Sigmoid colon (tissue), 7 donors: ENCODE measurements at regions of chr2 and their contacts with region 1.

Region 1: GRCh38 chr2:222903234-222904220 is 42.7 kb downstream of the ACSL3 start:
- DNase-seq: no peak
- H3K4me3 ChIP-seq: no peak overlapping the region
- H3K27ac ChIP-seq: no peak overlapping the region
- H3K4me1 ChIP-seq: peaks cover 0 to 71% (median 61%) of the 10 kb centered on the region in 4 donors
- H3K27me3 ChIP-seq: no peaks in the 10 kb centered on the region
- CTCF ChIP-seq: peak; percentile 24 to 62 (median 56)
- EP300 ChIP-seq: no peak
- POLR2A ChIP-seq: no peak

Region 2: DNA sequence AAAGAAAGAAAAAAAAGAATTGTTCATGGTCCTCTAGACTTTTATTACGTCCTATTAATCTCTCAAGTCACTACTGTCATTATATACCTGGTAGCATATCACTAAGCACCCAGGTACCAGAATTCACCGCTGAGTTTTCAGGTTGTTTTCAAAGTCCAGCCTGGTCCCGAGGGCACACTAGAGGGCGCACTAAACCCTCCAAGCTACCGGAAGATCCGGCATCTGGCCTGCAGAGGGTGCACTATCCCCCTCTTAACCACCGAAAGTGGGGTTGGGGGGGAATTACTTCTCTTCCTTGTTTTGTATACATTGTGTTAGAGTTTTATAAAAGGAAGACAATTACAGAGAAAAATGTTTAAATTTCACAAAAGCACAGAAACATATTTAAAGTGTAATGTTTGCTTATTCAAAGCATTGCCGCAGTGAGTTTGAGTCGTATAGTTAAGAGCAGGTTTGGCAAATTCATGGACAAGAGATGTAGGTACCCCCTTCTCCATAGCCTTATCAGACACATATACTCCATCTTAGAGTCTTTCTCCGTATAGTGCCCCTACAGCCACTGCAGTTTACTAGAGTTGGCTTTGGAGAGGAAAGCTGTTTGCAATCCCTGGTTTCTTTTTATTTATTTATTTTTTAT is 212.8 kb before region 1 on chr2:
- intact Hi-C with region 1: loop called (anchors 5 kb)
- DNase-seq: peak; percentile 80
- H3K4me3 ChIP-seq: no peak overlapping the region
- H3K27ac ChIP-seq: no peak overlapping the region
- H3K4me1 ChIP-seq: peaks cover 0 to 7% (median 3%) of the 10 kb centered on the region in 4 donors
- H3K27me3 ChIP-seq: no peaks in the 10 kb centered on the region
- CTCF ChIP-seq: peak; percentile 77 to 96 (median 89)
- EP300 ChIP-seq: no peak
- POLR2A ChIP-seq: no peak

Region 3: GRCh38 chr2:222707689-222708525 is 195.6 kb before region 1 on chr2:
- intact Hi-C with region 1: loop called (anchors 2 kb)
- DNase-seq: peak; percentile 87
- H3K4me3 ChIP-seq: no peak overlapping the region
- H3K27ac ChIP-seq: no peak overlapping the region
- H3K4me1 ChIP-seq: peaks cover 0 to 25% (median 19%) of the 10 kb centered on the region in 4 donors
- H3K27me3 ChIP-seq: no peaks in the 10 kb centered on the region
- CTCF ChIP-seq: peak; percentile 91 to 98 (median 94)
- EP300 ChIP-seq: no peak
- POLR2A ChIP-seq: no peak

Region 4: GRCh38 chr2:222797261-222797660 is 106.3 kb before region 1 on chr2:
- intact Hi-C with region 1: loop called (anchors 5 kb)
- DNase-seq: no peak
- H3K4me3 ChIP-seq: no peak overlapping the region
- H3K27ac ChIP-seq: no peak overlapping the region
- H3K4me1 ChIP-seq: peaks cover 0 to 19% (median 11%) of the 10 kb centered on the region in 4 donors
- H3K27me3 ChIP-seq: no peaks in the 10 kb centered on the region
- CTCF ChIP-seq: peak in 2 of 4 experiments; percentile 45 to 49
- EP300 ChIP-seq: no peak
- POLR2A ChIP-seq: no peak